Activated CD4-positive, alpha-beta T cell treated with anti-CD3 and anti-CD28 coated beads for 36 hours (primary cell): ENCODE measurements at regions of chr1 and their contacts with region 1.

Region 1: GRCh38 chr1:37486680-37487618 is 12.6 kb downstream of the ZC3H12A start:
- DNase-seq: peak; percentile 87
- ATAC-seq: peak; percentile 74
- H3K4me3 Mint-ChIP-seq: no peak overlapping the region
- H3K27ac Mint-ChIP-seq: peak overlapping the region; percentile 56
- H3K4me1 Mint-ChIP-seq: peaks cover 17% of the 10 kb centered on the region
- H3K27me3 Mint-ChIP-seq: no peaks in the 10 kb centered on the region

Region 2: GRCh38 chr1:37458528-37458927 is 28.4 kb before region 1 on chr1:
- CTCF ChIA-PET with region 1: interaction called, 194 read pairs
- POLR2A ChIA-PET with region 1: interaction called, 5 read pairs
- intact Hi-C with region 1: loop called (anchors 1 kb)
- DNase-seq: no peak
- ATAC-seq: no peak
- H3K4me3 Mint-ChIP-seq: no peak overlapping the region
- H3K27ac Mint-ChIP-seq: no peak overlapping the region
- H3K4me1 Mint-ChIP-seq: peaks cover 7% of the 10 kb centered on the region
- H3K27me3 Mint-ChIP-seq: no peaks in the 10 kb centered on the region

Region 3: GRCh38 chr1:37498872-37499617 is 12.1 kb after region 1 on chr1:
- CTCF ChIA-PET with region 1: interaction called, 43 read pairs
- POLR2A ChIA-PET with region 1: interaction called, 5 read pairs
- intact Hi-C with region 1: no loop called
- DNase-seq: no peak
- ATAC-seq: no peak
- H3K4me3 Mint-ChIP-seq: no peak overlapping the region
- H3K27ac Mint-ChIP-seq: no peak overlapping the region
- H3K4me1 Mint-ChIP-seq: peaks cover 19% of the 10 kb centered on the region
- H3K27me3 Mint-ChIP-seq: no peaks in the 10 kb centered on the region

Region 4: DNA sequence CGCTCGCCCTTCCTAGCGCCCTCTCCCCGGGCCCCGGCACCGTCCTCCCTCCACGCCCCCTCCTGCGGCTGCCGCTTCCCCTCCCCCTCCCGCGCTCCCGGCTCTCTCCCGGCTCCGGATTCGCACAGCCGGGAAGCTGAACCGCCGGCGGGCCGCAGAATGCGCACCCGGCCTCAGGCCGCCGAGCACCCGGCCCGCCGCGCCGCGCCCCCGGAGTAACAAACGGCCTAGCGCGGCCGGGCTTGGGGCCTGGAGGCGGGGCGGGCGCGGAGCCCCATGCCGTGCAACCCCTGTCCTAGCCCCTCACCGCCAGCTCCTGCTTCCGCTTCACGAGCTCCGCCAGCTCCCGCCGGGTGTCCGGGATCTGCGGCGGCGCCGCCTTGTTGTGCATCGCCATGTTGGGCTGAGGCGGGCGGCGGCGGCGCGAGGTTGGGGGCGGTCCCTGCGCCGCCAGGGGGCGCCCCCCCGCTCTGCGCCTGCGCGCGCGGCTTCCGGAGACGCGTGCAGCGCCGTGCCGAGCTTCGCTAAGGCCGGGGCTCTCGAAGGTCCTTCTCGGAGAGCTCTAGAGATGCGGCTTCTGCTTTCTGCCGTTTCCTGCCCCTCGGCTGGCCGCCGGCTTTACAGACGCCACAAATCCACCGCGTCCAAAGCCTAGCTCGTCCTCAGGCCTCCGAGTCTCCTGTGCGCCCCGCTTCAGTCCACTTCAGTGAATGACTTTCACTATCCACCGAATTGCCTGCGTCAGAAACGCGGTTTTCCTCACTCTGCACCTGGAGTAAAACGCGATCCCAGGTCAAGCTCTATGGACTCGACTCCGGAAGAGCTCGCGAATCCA is 27.6 kb after region 1 on chr1 and contains the start of gene MEAF6:
- CTCF ChIA-PET with region 1: interaction called, 21 read pairs
- POLR2A ChIA-PET with region 1: interaction called, 4 read pairs
- intact Hi-C with region 1: loop called in 1 of 2 experiments (anchors 2 kb)
- DNase-seq: peak; percentile 91
- ATAC-seq: peak; percentile 88
- H3K4me3 Mint-ChIP-seq: peak within 1 kb of the TSS; percentile 87
- H3K27ac Mint-ChIP-seq: peak within 1 kb of the TSS; percentile 93
- H3K4me1 Mint-ChIP-seq: peaks cover 41% of the 10 kb centered on the region
- H3K27me3 Mint-ChIP-seq: no peaks in the 10 kb centered on the region
- total RNA-seq, gene MEAF6: 66.8 to 72.2 TPM

Region 5: DNA sequence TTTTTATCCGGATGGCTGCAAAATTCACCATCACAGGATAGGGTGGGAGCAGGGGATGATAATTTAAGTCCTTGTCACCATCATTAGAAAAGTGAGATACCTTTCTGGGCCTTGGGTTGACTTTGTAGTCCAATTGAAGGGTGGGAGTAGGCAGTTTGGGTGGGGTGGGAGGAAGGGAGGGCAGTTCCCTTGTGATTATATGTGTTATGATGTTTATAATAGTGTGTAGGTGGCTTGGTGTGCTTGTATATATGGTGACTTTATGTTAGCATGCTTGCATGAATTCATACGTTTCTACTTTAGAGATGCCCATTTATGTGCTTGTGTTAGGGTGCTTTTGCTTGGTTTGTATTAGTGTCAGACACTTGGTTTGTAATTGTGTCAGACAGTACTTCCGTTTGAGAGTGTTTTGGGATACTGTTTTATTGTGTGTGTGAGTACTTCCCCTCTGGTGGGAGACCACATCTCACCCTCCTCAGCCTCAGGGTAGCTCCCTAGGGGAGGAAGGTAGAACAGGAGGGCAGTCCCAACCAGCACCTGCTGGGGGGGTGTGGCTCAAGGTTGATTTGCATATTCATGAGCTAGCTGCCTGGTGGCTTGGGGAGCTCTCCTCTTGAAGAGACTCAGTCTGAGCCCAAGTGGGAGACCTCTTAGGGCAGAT is 565.9 kb after region 1 on chr1:
- CTCF ChIA-PET with region 1: no interaction called
- POLR2A ChIA-PET with region 1: no interaction called
- intact Hi-C with region 1: no loop called
- DNase-seq: no peak
- ATAC-seq: no peak
- H3K4me3 Mint-ChIP-seq: no peak overlapping the region
- H3K27ac Mint-ChIP-seq: no peak overlapping the region
- H3K4me1 Mint-ChIP-seq: peaks cover 6% of the 10 kb centered on the region
- H3K27me3 Mint-ChIP-seq: peaks cover 20% of the 10 kb centered on the region